ENCODE measurements at regions of chr6 and their contacts with region 1.

Region 1: DNA sequence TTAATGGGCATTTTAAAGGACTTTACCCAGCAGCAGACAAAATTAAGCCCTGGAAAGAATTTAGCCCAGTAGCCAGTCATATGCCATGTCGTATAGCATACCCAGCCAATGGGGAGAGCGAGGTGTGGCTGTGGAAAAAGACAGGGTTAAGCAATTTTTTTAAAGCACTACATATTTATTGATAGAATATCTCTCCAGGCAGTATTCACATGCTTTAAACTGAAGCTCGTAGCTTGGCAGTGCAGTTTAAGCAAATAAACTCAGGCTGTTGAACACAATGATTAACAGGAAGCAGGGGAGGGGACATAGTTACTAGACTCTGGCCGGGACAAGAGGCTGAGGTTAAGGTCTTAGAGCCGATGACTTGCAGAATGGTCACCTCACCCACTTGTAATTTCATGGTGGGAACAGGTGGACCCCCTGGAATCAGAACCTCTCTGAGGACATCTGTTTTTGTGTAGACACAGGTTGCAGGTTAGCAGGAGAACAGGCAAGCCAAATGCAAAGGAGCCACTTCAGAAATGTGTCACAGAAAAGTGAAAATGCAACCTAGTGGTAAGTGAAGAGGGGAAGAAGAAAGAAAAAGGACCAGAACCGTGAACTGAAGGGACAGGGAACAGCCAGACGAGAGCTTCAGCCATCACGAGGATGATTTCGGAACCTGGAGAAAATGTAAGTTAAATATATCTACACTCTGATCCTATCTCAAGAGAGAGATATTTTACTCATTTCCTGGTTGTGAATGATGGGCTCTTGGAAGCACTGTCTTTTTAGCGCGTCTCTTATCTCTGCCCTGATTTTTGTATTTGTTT is 7.2 kb downstream of the GCNT2 start:
- DNase-seq: no peak
- H3K4me3 ChIP-seq: peak overlapping the region; percentile 26 to 64 (median 43)
- H3K27ac ChIP-seq: peak overlapping the region; percentile 90 to 92
- H3K4me1 ChIP-seq: no peaks in the 10 kb centered on the region
- H3K27me3 ChIP-seq: no peaks in the 10 kb centered on the region
- CTCF ChIP-seq: no peak
- POLR2A ChIP-seq: no peak

Region 2: DNA sequence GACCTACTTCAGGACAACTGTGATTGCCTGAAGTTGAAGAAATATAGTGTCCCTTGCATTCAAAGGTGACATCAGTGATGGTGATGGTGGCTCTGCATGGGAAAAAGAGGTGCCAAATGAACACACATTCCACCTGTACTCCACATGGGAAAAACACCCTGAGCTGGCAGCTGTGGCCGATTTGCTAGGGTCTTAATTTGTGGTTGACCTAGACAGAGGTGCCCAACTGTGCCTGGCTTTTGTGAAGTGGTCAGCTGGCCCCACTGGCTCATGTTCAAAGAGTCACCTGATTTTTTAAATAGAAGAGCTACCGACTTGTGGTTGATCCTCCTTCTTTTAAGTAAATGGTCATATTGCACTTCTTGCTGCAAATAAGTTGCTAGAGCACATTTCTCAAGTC is 14.8 kb before region 1 on chr6:
- intact Hi-C with region 1: loop called (anchors 1 kb)
- DNase-seq: no peak
- H3K4me3 ChIP-seq: no peak overlapping the region
- H3K27ac ChIP-seq: no peak overlapping the region
- H3K4me1 ChIP-seq: no peaks in the 10 kb centered on the region
- H3K27me3 ChIP-seq: no peaks in the 10 kb centered on the region
- CTCF ChIP-seq: no peak
- POLR2A ChIP-seq: no peak

Region 3: DNA sequence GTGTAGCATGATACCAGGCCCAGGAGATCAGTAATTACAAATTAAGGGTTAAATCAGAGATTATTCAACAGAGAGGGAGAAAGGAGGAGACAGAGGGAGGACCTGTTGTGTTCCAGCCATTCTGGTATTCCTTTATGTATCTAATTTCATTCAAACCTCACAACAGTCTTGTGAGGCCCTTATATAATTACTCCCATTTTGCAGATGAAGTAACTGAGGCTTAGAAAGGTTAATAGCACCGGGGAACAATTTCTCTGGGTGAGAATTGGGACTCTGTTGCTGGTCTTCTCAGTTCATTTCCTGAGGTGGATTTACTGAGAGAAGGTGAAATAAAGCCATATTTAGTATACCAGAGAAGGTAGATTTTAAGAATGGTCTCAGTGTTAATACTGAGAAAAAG is 99.4 kb after region 1 on chr6:
- intact Hi-C with region 1: loop called (anchors 2 kb)
- DNase-seq: no peak
- H3K4me3 ChIP-seq: no peak overlapping the region
- H3K27ac ChIP-seq: no peak overlapping the region
- H3K4me1 ChIP-seq: no peaks in the 10 kb centered on the region
- H3K27me3 ChIP-seq: no peaks in the 10 kb centered on the region
- CTCF ChIP-seq: no peak
- POLR2A ChIP-seq: no peak